ENCODE measurements at regions of chr9 and their contacts with region 1.

Region 1: GRCh38 chr9:88534456-88535261 is at the start of gene NXNL2:
- DNase-seq: peak; percentile 82
- ATAC-seq: peak; percentile 73
- H3K4me3 ChIP-seq: peak within 1 kb of the TSS; percentile 95
- H3K27ac ChIP-seq: peak within 1 kb of the TSS; percentile 91
- H3K4me1 ChIP-seq: peaks cover 28% of the 10 kb centered on the region
- H3K27me3 ChIP-seq: no peaks in the 10 kb centered on the region
- CTCF ChIP-seq: no peak
- POLR2A ChIP-seq: no peak
- RAD21 ChIP-seq: no peak
- total RNA-seq, gene NXNL2: 3.2 and 4.7 TPM in 2 replicates

Region 2: GRCh38 chr9:88523056-88523455 is 11.6 kb before region 1 on chr9:
- CTCF ChIA-PET with region 1: no interaction called
- POLR2A ChIA-PET with region 1: interaction called, 12 read pairs
- dilution Hi-C with region 1: no loop called
- in situ Hi-C with region 1: no loop called
- intact Hi-C with region 1: no loop called
- DNase-seq: peak; percentile 84
- ATAC-seq: peak; percentile 65
- H3K4me3 ChIP-seq: no peak overlapping the region
- H3K27ac ChIP-seq: no peak overlapping the region
- H3K4me1 ChIP-seq: peaks cover 10% of the 10 kb centered on the region
- H3K27me3 ChIP-seq: no peaks in the 10 kb centered on the region
- CTCF ChIP-seq: no peak
- POLR2A ChIP-seq: no peak
- RAD21 ChIP-seq: no peak

Region 3: GRCh38 chr9:89000973-89001916 is 466.6 kb after region 1 on chr9:
- CTCF ChIA-PET with region 1: no interaction called
- POLR2A ChIA-PET with region 1: no interaction called
- dilution Hi-C with region 1: no loop called
- in situ Hi-C with region 1: no loop called
- intact Hi-C with region 1: no loop called
- DNase-seq: peak; percentile 81
- ATAC-seq: peak; percentile 85
- H3K4me3 ChIP-seq: no peak overlapping the region
- H3K27ac ChIP-seq: peak overlapping the region; percentile 30; the same call in 1 of the 2 replicates
- H3K4me1 ChIP-seq: peaks cover 16% of the 10 kb centered on the region
- H3K27me3 ChIP-seq: no peaks in the 10 kb centered on the region
- CTCF ChIP-seq: peak; percentile 91
- POLR2A ChIP-seq: peak; percentile 49; the same call in 1 of the 2 replicates
- RAD21 ChIP-seq: peak; percentile 93